Activated T-helper 2 cell treated with anti-CD3 and anti-CD28 coated beads, Interferon-gamma antibody, Interleukin-2, Interleukin-4, amounts not matched to agents 10 μg/mL and 5 μg/mL and 100 μg/mL, durations not matched to agents 14 hours and 24 hours and 36 hours (primary cell): ENCODE measurements at regions of chr2 and their contacts with region 1.

Region 1: DNA sequence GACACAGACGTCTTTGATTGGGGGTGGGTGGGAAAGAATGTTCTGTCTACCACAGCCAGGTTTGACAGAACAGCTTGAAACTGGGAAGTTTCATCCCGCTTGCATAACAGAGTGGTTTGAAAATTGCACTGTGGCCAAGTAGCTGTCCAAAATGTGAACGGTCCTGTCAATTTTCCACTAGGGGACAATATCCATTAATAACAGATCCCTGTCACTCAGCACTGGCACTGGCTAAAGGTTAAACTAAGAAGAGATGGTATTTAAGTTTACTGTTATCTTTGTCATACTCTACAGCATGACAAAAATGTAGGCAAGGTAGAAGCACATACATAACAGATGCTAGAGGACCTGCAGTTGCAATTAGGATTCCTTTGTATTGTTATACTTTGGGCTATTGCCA is 55.6 kb upstream of the ACMSD start:
- DNase-seq: no peak
- H3K4me3 Mint-ChIP-seq: no peak overlapping the region
- H3K27ac Mint-ChIP-seq: no peak overlapping the region
- H3K4me1 Mint-ChIP-seq: peaks cover 5% of the 10 kb centered on the region
- H3K27me3 Mint-ChIP-seq: peaks cover 14% of the 10 kb centered on the region

Region 2: GRCh38 chr2:133213651-133214050 is 1569.1 kb before region 1 on chr2:
- intact Hi-C with region 1: no loop called
- DNase-seq: no peak
- H3K4me3 Mint-ChIP-seq: no peak overlapping the region
- H3K27ac Mint-ChIP-seq: no peak overlapping the region
- H3K4me1 Mint-ChIP-seq: no peaks in the 10 kb centered on the region
- H3K27me3 Mint-ChIP-seq: no peaks in the 10 kb centered on the region

Region 3: GRCh38 chr2:134460583-134460998 is 322.2 kb before region 1 on chr2:
- intact Hi-C with region 1: loop called (anchors 10 kb)
- DNase-seq: no peak
- H3K4me3 Mint-ChIP-seq: no peak overlapping the region
- H3K27ac Mint-ChIP-seq: no peak overlapping the region
- H3K4me1 Mint-ChIP-seq: no peaks in the 10 kb centered on the region
- H3K27me3 Mint-ChIP-seq: no peaks in the 10 kb centered on the region

Region 4: DNA sequence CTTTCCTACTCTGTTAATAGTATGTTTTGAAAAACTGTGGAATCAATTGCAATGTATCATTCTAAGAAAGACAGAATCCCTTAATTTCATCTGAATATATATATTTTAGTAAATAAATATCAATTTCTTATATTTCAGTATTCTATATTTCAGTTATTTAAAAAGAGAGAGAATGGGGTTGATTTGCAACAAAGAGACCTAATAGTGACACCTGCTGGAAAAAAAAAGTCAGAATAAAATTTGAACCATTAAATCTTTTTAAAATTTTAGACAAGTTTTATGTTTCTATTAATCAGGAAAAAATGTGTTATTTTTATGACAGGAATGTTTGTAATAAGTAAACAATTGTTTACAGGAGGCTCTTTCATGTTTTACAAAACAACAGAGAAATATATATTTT is 115.1 kb after region 1 on chr2:
- intact Hi-C with region 1: loop called (anchors 10 kb)
- DNase-seq: no peak
- H3K4me3 Mint-ChIP-seq: no peak overlapping the region
- H3K27ac Mint-ChIP-seq: no peak overlapping the region
- H3K4me1 Mint-ChIP-seq: no peaks in the 10 kb centered on the region
- H3K27me3 Mint-ChIP-seq: peaks cover 27% of the 10 kb centered on the region